ENCODE measurements at regions of chr7 and their contacts with region 1.

Region 1: DNA sequence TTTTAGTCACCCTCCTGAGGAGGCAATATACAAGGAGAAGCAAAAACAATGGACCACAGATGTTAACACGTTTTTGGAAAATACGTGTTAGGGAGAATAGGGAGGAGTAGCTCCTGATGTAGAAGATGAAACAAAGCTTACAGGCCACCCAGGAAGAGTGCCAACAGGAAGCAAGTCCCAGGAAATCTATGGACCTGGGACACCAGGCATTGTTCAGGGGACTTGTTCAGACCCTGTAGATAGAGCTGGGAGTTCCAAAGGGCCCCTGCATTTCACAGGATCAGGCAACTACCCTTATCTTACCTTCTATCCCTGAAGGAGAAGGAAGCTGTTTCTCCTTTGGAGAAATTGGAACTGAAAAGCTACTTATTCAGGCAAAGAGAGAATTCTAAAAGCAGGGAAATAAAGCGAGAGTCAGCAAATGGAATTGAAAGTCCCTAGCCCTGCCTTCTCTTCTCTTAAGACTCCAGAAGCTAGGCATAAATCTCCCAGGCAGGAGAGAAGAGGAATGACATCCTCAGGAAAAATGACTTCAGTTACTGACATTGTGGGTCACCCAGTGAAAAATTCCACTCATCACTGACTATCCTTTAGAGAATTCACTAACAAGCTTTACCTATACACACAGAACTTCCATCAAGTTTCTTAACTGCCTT is 77.7 kb upstream of the FAM3C start:
- DNase-seq: no peak
- ATAC-seq: no peak
- H3K4me3 ChIP-seq: no peak overlapping the region
- H3K27ac ChIP-seq: no peak overlapping the region
- H3K4me1 ChIP-seq: peaks cover 0 to 15% of the 10 kb centered on the region in 2 experiments; a peak in 2 of 4 replicates
- H3K27me3 ChIP-seq: no peaks in the 10 kb centered on the region
- CTCF ChIP-seq: no peak
- POLR2A ChIP-seq: no peak
- RAD21 ChIP-seq: no peak

Region 2: GRCh38 chr7:121428855-121429489 is 44.8 kb before region 1 on chr7:
- CTCF ChIA-PET with region 1: no interaction called
- POLR2A ChIA-PET with region 1: no interaction called
- RAD21 ChIA-PET with region 1: no interaction called
- intact Hi-C with region 1: loop called (anchors 1 kb)
- DNase-seq: no peak
- ATAC-seq: no peak
- H3K4me3 ChIP-seq: no peak overlapping the region
- H3K27ac ChIP-seq: no peak overlapping the region
- H3K4me1 ChIP-seq: no peaks in the 10 kb centered on the region
- H3K27me3 ChIP-seq: no peaks in the 10 kb centered on the region
- CTCF ChIP-seq: no peak
- POLR2A ChIP-seq: no peak
- RAD21 ChIP-seq: no peak

Region 3: DNA sequence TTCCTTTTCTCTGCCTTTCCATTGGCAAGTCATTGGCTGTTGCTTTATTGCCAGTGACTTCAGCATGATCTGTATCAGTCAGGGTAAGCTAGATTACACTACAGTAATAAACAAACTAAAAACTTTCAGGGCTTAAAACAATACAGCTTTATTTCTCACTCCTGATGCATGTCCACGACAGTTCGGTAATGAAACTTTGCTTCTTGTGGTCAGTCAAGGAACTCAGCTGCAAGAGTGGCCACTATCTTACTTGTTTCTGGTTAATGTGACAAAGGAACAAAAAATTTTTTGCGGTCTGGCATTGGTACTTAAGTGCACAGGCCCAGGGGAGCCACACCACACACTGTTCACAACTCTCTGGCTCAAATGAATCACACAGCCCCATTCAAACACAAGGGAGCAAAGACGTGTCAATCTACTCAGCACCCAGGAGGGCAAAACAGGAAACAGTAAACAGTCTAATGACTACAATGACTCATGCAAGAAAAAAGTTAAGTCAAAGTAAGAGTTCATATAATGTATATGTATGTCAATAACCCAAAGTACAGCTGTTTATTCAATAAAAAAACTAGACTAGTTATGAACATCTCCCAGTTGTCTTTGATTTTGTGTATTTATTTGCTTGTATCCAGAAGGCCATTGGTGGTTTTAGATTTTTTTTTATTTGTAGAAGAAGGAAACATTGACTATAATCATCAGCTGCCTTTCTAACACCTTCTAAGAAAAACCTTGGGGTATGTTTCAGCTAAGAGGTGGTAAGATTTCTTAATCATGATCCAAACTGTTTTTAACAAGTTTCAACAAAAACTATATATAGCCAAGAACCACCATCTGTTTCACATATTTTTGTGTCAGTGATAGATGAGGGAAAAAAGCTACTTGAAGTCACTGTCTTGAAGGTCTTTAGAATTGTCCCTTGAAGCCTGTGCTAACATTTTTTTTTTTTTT is 56.7 kb after region 1 on chr7:
- CTCF ChIA-PET with region 1: no interaction called
- POLR2A ChIA-PET with region 1: no interaction called
- RAD21 ChIA-PET with region 1: no interaction called
- intact Hi-C with region 1: no loop called
- DNase-seq: peak; percentile 100
- ATAC-seq: peak; percentile 96
- H3K4me3 ChIP-seq: peak overlapping the region in 1 of 2 experiments; percentile 17; a peak in 2 of 4 replicates
- H3K27ac ChIP-seq: peak overlapping the region; percentile 77
- H3K4me1 ChIP-seq: peaks cover 32 to 48% of the 10 kb centered on the region in 2 experiments
- H3K27me3 ChIP-seq: no peaks in the 10 kb centered on the region
- CTCF ChIP-seq: no peak
- POLR2A ChIP-seq: no peak
- RAD21 ChIP-seq: peak; percentile 54; the same call in 1 of the 2 replicates

Measured in HCT116 (cell line).